Activated CD8-positive, alpha-beta T cell treated with anti-CD3 and anti-CD28 coated beads, Interleukin-2, amount 10 ng/mL, durations not matched to agents 7 days and 5 days (primary cell): ENCODE measurements at regions of chr7 and their contacts with region 1.

Region 1: GRCh38 chr7:140175221-140176121 is 1.3 kb downstream of the KDM7A start:
- DNase-seq: peak; percentile 93
- ATAC-seq: peak; percentile 57
- H3K4me3 Mint-ChIP-seq: peak overlapping the region; percentile 82
- H3K27ac Mint-ChIP-seq: peak overlapping the region; percentile 87
- H3K4me1 Mint-ChIP-seq: peaks cover 22% of the 10 kb centered on the region
- H3K27me3 Mint-ChIP-seq: peaks cover 21% of the 10 kb centered on the region

Region 2: DNA sequence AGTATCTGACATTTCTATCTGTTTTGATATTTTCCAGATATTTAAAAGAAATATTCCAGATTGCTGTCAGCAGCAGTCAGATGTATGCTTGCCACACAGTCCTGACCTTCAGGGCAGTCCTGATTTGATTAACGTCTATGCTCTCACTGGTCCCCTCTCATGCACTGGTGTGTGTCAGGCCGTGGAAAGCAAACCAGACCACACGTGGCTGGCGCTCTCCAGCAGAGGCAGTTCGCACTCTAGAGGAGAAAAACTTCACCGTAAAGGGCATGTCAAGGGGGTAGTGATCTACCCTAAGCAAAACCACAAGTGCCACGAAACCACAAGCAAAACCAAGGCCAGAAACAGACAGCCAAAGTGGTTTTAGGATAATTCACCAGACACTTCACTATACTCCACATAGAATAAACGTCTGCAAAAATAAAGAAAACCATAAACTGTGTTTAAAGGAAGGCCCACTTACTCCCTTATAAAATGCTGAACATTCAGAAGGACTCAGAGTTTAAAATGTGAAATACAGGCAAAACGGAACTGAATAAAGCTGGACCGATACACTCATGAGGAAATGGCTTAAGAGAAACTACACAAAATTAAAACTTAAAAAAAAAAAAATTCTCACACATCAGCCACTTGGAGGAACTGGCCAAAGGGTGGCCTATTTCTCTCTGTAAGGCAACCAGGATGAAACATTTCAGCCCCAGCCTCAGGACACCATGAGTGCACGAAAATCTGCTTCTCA is 139.1 kb before region 1 on chr7:
- CTCF ChIA-PET with region 1: no interaction called
- POLR2A ChIA-PET with region 1: no interaction called
- DNase-seq: peak; percentile 37
- ATAC-seq: peak; percentile 70
- H3K4me3 Mint-ChIP-seq: no peak overlapping the region
- H3K27ac Mint-ChIP-seq: peak overlapping the region; percentile 36
- H3K4me1 Mint-ChIP-seq: peaks cover 47% of the 10 kb centered on the region
- H3K27me3 Mint-ChIP-seq: no peaks in the 10 kb centered on the region

Region 3: GRCh38 chr7:140230861-140231770 is 55.6 kb after region 1 on chr7:
- CTCF ChIA-PET with region 1: interaction called, 6 read pairs
- POLR2A ChIA-PET with region 1: interaction called, 25 read pairs
- DNase-seq: peak; percentile 66
- ATAC-seq: peak; percentile 47
- H3K4me3 Mint-ChIP-seq: peak overlapping the region; percentile 85
- H3K27ac Mint-ChIP-seq: peak overlapping the region; percentile 89
- H3K4me1 Mint-ChIP-seq: peaks cover 37% of the 10 kb centered on the region
- H3K27me3 Mint-ChIP-seq: peaks cover 2% of the 10 kb centered on the region